ENCODE measurements at regions of chr1 and their contacts with region 1.

Region 1: DNA sequence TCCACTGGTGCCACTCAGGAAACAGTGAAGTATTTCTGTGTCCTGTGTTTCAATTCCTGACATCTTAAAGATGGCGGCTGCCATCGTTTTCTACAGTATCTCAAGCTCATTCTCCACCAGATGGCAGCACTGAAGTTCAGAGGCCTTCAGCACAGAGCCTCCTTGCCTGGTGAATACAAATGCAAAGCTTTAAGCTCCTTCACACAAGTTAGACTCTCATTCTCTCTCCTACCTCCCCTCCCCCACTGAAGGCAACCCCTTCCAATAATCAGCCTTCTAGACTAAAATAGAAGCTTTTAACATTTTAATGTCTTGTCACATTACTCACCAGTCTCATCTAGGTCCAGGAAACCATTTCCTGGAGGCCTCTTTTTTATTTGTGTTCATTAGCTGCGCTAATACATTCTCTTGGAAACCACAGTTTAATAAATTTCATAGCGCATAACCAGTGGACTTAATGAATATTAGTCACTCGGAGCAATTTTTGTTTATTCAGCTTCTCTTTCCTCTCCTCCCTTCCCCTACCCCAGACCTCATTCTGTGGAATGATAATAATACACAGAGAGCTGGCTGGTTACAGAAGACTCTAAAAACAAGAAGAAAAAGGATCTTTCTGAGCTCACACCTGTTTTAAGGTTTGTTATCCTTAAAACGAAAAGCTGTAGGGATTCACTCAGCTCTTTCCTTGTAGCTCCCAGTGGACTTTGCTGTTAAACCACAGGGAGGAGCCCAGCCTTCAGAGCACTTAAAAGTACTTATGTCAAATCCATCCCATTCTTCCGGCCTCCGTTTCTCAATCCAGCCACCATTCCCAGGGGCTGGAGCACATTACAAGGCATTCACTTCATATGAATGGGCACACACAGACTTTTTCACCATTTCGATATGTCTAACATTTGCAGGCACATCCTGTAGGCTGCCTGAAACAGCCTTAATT is 384.9 kb downstream of the HLX start:
- DNase-seq: peak; percentile 81
- H3K4me3 ChIP-seq: no peak overlapping the region
- CTCF ChIP-seq: peak; percentile 69

Region 2: DNA sequence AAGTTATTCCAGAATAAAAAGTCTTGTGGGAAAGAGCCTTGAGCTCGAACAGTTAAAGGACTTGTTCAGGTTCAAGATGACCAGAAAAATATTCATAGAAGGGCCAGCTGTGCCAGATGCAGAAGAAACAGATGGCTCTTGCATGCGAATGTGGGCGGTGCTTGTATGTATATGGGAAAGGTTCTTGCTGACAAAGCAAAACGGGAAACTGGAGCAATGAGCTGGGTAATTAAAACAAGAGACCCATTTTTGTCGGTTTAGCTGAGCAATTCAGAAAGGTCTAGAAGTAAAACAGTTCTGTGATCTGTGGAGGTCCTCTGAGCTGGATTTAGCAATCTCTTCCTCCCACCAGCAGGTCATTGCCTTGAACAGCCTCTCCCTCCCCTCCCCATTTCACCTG is 843.4 kb before region 1 on chr1:
- CTCF ChIA-PET with region 1: no interaction called
- POLR2A ChIA-PET with region 1: no interaction called
- DNase-seq: no peak
- H3K4me3 ChIP-seq: no peak overlapping the region
- CTCF ChIP-seq: no peak

Region 3: DNA sequence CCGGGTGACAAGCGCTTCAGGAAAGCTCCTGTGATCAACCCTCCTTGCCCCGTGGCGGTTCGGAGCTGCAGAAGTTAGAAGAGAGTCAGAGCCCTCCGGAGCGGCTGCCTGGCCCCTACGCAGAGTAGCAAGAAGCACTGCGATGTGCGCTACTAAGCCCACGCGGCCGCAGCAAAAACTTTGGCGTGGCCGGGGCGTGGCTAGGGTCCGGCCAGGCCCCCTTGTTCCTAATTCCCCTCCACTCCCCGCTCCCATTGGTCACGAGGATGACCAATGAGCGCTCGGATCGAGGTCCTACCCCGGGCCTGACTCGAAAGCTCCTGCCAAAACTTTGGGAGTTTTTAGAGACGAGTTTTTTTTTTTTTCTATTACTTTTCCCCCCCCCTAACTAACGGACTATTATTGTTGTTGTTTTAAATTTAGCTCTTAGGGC is 385.0 kb before region 1 on chr1 and contains the start of gene HLX:
- CTCF ChIA-PET with region 1: interaction called, 52 read pairs
- POLR2A ChIA-PET with region 1: no interaction called
- DNase-seq: peak; percentile 57
- H3K4me3 ChIP-seq: peak within 1 kb of the TSS; percentile 77
- CTCF ChIP-seq: no peak

Region 4: GRCh38 chr1:221284028-221284427 is 19.9 kb after region 1 on chr1:
- CTCF ChIA-PET with region 1: interaction called, 13 read pairs
- POLR2A ChIA-PET with region 1: no interaction called
- DNase-seq: peak; percentile 51
- H3K4me3 ChIP-seq: no peak overlapping the region
- CTCF ChIP-seq: no peak

Region 5: GRCh38 chr1:221418346-221418745 is 154.2 kb after region 1 on chr1:
- CTCF ChIA-PET with region 1: interaction called, 14 read pairs
- POLR2A ChIA-PET with region 1: no interaction called
- DNase-seq: no peak
- H3K4me3 ChIP-seq: no peak overlapping the region
- CTCF ChIP-seq: no peak

Region 6: GRCh38 chr1:221478050-221478949 is 214.2 kb after region 1 on chr1:
- CTCF ChIA-PET with region 1: interaction called, 11 read pairs
- POLR2A ChIA-PET with region 1: no interaction called
- DNase-seq: peak; percentile 63
- H3K4me3 ChIP-seq: no peak overlapping the region
- CTCF ChIP-seq: peak; percentile 96